Endothelial cell of umbilical vein (primary cell): ENCODE measurements at regions of chr1 and their contacts with region 1.

Region 1: GRCh38 chr1:928825-929661 is 5.3 kb downstream of the SAMD11 start:
- DNase-seq: no peak
- H3K4me3 ChIP-seq: no peak overlapping the region
- H3K27ac ChIP-seq: no peak overlapping the region
- H3K4me1 ChIP-seq: no peaks in the 10 kb centered on the region
- H3K27me3 ChIP-seq: peaks cover 19 to 20% of the 10 kb centered on the region in 2 experiments
- CTCF ChIP-seq: no peak
- POLR2A ChIP-seq: no peak

Region 2: DNA sequence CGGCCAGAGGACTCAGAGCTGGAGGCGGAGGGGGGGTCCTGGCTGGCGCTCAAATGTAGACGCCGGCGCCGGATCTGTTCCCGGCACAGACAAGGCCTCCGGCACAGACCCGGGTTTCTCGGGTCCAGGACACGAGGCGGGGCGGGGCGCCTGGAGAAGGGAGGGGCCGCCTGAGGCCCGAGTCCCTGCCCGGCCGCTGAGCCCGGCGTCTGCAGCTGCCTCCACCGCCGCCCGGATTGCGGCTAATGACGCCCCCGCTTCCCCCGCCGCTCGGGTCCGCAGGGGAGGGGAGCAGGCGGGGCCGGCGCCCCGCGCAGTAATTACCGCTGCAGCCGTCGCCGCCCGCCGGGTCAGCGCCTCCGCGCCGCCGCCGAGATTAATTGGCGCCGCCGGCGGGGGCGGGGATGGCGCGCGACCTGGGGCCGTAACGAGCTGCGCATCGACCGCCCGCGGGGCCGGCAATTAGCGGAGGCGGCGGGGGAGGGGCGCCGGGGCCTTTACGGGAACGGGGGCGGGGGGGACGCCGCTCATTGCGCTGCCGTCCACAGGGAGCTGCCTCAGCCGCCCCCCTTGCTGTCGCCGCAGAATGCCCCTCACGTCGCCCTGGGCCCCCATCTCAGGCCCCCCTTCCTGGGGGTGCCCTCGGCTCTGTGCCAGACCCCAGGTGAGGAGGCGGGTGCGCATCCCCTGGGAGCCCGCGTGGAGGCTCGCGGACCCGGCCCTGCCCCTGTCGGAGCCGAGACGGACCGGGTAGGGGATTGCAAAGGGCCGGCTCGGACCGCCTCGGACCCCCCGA is 12.7 kb after region 1 on chr1:
- CTCF ChIA-PET with region 1: interaction called, 13 read pairs
- POLR2A ChIA-PET with region 1: no interaction called
- dilution Hi-C with region 1: no loop called
- intact Hi-C with region 1: no loop called
- DNase-seq: peak; percentile 16
- H3K4me3 ChIP-seq: no peak overlapping the region
- H3K27ac ChIP-seq: no peak overlapping the region
- H3K4me1 ChIP-seq: peaks cover 12% of the 10 kb centered on the region
- H3K27me3 ChIP-seq: peaks cover 7 to 29% of the 10 kb centered on the region in 2 experiments
- CTCF ChIP-seq: no peak
- POLR2A ChIP-seq: no peak